Activated T-helper 1 cell treated with anti-CD3 and anti-CD28 coated beads, Interleukin-12 subunit alpha, Interleukin-12 subunit beta, Interleukin-2, Interleukin-4 antibody, amounts not matched to agents 30 ng/mL and 10 ng/mL and 1 ng/mL, durations not matched to agents 14 hours and 24 hours and 36 hours (primary cell): ENCODE measurements at regions of chr11 and their contacts with region 1.

Region 1: GRCh38 chr11:132131047-132131446 is 760.6 kb downstream of the NTM start:
- DNase-seq: no peak
- H3K4me3 Mint-ChIP-seq: no peak overlapping the region
- H3K27ac Mint-ChIP-seq: no peak overlapping the region
- H3K4me1 Mint-ChIP-seq: no peaks in the 10 kb centered on the region
- H3K27me3 Mint-ChIP-seq: no peaks in the 10 kb centered on the region

Region 2: DNA sequence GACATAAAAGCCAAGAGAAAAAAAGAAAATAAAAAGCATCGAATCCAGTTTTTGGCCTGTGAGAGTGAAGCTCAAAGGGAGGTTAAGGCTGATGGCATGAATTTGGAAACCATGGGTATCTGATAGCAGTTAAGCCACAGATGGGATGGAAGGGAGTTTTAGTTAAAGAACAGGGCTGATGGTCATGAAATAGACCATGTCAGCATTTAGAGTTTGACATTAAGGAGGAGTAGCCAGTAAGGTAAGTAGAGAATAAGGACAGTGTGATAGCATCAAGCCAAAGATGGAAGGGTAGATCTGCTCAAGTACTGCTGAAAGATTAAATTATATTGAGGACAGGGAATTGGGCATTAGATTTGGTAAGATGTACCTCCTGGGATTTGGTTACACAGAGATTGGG is 65.9 kb after region 1 on chr11:
- intact Hi-C with region 1: loop called (anchors 10 kb)
- DNase-seq: no peak
- H3K4me3 Mint-ChIP-seq: no peak overlapping the region
- H3K27ac Mint-ChIP-seq: no peak overlapping the region
- H3K4me1 Mint-ChIP-seq: no peaks in the 10 kb centered on the region
- H3K27me3 Mint-ChIP-seq: no peaks in the 10 kb centered on the region